ENCODE measurements at regions of chr12 and their contacts with region 1.

Region 1: DNA sequence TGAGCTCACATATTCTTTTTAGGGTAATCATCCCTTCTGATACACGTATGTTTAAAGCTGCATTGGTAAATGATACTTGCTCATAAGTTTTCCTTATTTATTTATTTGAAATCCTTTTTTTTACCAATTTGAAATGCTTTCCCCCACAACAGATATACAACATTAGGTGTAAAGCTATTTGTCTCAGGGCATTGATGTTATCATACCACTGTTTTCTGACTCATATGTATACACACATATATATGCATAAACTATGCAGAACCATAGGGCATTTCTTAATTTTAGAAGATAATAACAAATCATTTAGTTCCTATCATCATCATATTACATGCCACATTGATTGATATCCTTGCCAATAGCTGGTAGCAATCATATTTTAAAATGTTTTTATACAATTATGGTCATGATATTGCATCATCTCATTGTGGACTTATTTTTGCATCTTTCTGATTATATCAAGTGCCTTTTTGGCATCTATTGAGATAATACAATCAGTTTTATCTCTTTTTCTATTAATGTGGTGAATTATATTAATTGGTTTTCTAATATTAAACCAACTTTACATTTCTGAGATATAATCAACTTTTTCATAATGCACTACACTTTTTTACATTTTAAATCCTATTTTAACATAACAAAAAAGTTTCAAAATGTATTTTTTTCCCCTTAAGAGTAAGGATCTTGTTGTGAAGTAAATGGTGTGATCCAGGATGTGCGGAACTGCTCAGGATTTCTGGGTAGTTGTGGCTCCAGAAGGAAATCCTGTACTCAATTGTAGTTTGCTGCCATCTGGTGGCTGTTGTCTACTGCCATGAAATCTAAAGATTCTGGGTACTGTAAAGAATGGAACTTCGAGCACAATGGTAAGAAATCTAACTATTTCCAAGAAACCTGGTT is 16.7 kb downstream of the OR9K2 start:
- DNase-seq: peak in 36 of 42 donors; percentile 7 to 88 (median 58)

Region 2: DNA sequence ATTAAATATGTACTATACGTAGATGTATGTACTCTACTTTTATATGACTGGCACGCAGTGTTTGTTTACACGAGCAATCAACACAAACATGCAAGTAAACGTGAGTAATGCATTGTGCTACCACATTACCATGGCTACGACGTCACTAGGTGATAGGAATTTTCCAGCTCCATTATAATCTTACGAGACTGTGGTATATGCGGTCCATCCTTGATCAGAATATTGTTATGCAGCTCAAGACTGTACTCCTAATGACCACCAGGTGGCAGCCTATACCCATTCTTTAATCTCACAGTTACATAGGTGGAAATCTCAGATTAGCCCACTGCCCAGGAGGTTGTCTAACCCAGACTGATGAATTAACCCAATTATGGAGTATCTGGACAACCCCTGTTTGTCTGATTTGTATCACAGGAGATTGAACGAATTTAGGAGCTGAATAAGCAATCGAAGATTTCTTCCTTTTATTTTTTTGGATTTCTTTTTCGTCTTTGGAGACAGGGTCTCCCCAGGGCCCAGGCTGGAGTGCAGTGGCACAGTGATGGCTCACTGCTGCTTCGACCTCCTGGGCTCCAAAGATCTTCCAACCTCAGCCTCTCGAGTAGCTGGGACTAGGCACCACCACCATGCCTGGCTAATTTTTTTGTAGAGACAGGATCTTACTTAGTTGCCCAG is 149.6 kb before region 1 on chr12:
- intact Hi-C with region 1: loop called (anchors 10 kb)
- DNase-seq: peak in 37 of 42 donors; percentile 21 to 90 (median 71)

Region 3: GRCh38 chr12:55043542-55043941 is 99.4 kb before region 1 on chr12:
- intact Hi-C with region 1: no loop called
- DNase-seq: no peak

Region 4: GRCh38 chr12:55092579-55092978 is 50.3 kb before region 1 on chr12:
- intact Hi-C with region 1: no loop called
- DNase-seq: no peak

Region 5: GRCh38 chr12:55188974-55189556 is 46.1 kb after region 1 on chr12:
- intact Hi-C with region 1: no loop called
- DNase-seq: peak in 25 of 42 donors; percentile 8 to 81 (median 48)

Measured in head of caudate nucleus (tissue), 42 donors.